HepG2 (cell line): ENCODE measurements at regions of chr1 and their contacts with region 1.

Region 1: DNA sequence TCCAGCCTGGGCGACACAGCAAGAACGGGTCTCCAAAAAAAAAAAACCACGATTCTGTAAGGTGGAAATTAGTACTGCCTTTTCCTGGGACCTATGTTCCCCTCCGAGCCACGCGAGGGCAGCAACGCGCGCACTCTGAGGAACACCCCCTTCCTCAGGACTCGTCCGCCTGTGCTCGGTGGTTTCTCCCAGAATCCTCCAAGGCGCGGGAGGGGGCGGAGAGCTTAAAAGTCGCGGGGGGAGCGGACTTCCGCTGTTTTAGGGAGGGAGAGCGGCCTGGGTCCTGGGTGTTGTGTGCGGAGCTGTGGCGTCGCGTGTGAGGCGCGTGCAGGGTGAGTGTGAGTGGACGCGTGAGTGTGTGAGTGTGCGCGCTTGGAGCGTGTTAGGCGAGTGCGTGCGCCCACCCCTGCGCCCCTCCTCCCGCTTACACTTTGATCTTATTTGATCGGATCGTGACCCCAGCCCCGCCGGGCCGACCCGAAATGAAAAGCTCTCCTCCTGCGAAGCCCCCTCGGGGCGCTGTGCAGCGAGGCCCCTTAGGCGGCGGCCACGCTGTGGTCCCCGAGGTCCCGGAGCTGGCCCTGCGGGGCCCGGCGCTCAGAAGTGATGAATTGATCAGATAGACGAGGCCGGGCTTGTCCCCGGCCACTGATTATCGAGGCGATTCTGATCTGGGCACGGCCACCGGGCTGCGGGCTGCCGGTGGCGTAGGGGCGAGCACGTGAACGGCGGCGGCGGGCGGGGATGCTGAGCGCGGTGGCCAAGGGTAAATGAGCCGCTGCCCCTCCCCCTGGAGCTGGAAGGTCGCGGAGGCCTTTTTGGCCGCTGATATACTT is 9.6 kb downstream of the TMEM167B start:
- DNase-seq: peak; percentile 94
- ATAC-seq: peak; percentile 91
- H3K4me3 ChIP-seq: peak overlapping the region; percentile 75 to 90 (median 85)
- H3K27ac ChIP-seq: peak overlapping the region; percentile 86
- H3K4me1 ChIP-seq: peaks cover 15% of the 10 kb centered on the region; the same call in 1 of the 2 replicates
- H3K27me3 ChIP-seq: no peaks in the 10 kb centered on the region
- CTCF ChIP-seq: peak; percentile 96
- EP300 ChIP-seq: peak in 1 of 2 experiments; percentile 43; a peak in 2 of 4 replicates
- POLR2A ChIP-seq: peak; percentile 100
- RAD21 ChIP-seq: peak; percentile 14; the same call in 1 of the 2 replicates

Region 2: DNA sequence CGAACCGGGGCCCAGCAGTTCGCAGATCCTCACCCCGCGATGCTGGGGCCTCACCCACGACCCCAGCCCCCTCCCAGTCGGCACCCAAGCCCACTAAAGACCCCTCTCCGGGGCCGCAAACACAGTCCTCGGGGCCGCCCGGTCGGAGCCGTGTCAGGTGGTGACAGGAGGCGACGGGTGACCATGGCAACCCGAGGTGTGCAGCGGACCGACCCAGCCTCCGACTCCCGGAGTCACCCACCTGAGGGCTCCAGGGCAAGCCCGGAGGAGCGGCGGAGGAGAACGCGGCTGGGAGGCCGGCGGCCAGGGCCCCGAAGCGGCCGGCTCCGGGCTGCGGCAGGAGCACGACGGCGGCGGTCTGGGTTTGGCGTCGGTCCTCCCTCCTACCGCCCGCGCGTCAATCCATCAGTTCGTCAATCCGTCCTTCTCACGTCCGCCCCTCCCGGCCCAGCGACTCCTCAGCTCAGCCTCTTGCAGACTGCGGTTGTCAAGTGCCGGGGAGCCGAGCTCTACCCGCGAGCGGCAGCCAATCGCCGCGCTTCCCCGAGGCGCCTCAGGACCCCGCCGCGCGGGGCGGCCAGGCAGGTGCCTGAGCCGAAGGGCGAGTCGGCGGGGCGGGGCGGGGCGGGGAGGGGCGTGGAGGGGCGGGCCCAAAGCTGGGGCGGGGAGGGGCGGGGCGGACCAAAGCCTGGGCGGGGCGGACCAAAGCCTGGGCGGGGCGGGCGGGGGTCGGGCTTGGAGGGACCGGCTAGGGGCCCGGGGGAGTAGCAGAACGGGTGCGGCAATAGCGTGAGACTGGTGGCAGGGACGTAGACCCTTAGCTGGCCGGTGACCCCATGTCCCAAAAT is 58.3 kb before region 1 on chr1 and contains the start of gene WDR47:
- CTCF ChIA-PET with region 1: no interaction called
- POLR2A ChIA-PET with region 1: interaction called, 16 read pairs
- in situ Hi-C with region 1: no loop called
- intact Hi-C with region 1: no loop called
- DNase-seq: peak; percentile 84
- ATAC-seq: peak; percentile 96
- H3K4me3 ChIP-seq: peak within 1 kb of the TSS; percentile 94 to 96 (median 95)
- H3K27ac ChIP-seq: peak within 1 kb of the TSS; percentile 58
- H3K4me1 ChIP-seq: peaks cover 20% of the 10 kb centered on the region
- H3K27me3 ChIP-seq: no peaks in the 10 kb centered on the region; a peak in 1 of 5 replicates
- CTCF ChIP-seq: no peak
- EP300 ChIP-seq: no peak
- POLR2A ChIP-seq: peak; percentile 94 to 98
- RAD21 ChIP-seq: peak; percentile 61
- total RNA-seq, gene WDR47: 5.9 and 6.0 TPM in 2 replicates

Region 3: GRCh38 chr1:109075531-109076490 is 24.3 kb before region 1 on chr1 and contains the start of gene TAF13:
- CTCF ChIA-PET with region 1: no interaction called
- POLR2A ChIA-PET with region 1: interaction called, 25 read pairs
- in situ Hi-C with region 1: no loop called
- intact Hi-C with region 1: no loop called
- DNase-seq: peak; percentile 89
- ATAC-seq: peak; percentile 100
- H3K4me3 ChIP-seq: peak within 1 kb of the TSS; percentile 67 to 90 (median 86)
- H3K27ac ChIP-seq: peak within 1 kb of the TSS; percentile 96
- H3K4me1 ChIP-seq: peaks cover 40% of the 10 kb centered on the region
- H3K27me3 ChIP-seq: no peaks in the 10 kb centered on the region; a peak in 2 of 5 replicates
- CTCF ChIP-seq: peak; percentile 54
- EP300 ChIP-seq: no peak
- POLR2A ChIP-seq: peak; percentile 96 to 97
- RAD21 ChIP-seq: peak; percentile 9; the same call in 1 of the 2 replicates
- total RNA-seq, gene TAF13: 36.3 and 62.1 TPM in 2 replicates

Region 4: GRCh38 chr1:109083923-109084322 is 16.2 kb before region 1 on chr1:
- CTCF ChIA-PET with region 1: interaction called, 15 read pairs
- POLR2A ChIA-PET with region 1: interaction called, 117 read pairs
- in situ Hi-C with region 1: no loop called
- intact Hi-C with region 1: no loop called
- DNase-seq: peak; percentile 82
- ATAC-seq: peak; percentile 67
- H3K4me3 ChIP-seq: peak overlapping the region in 1 of 3 experiments; percentile 57; a peak in 1 of 6 replicates
- H3K27ac ChIP-seq: peak overlapping the region; percentile 21
- H3K4me1 ChIP-seq: peaks cover 45% of the 10 kb centered on the region
- H3K27me3 ChIP-seq: no peaks in the 10 kb centered on the region
- CTCF ChIP-seq: no peak
- EP300 ChIP-seq: no peak
- POLR2A ChIP-seq: no peak
- RAD21 ChIP-seq: no peak

Region 5: DNA sequence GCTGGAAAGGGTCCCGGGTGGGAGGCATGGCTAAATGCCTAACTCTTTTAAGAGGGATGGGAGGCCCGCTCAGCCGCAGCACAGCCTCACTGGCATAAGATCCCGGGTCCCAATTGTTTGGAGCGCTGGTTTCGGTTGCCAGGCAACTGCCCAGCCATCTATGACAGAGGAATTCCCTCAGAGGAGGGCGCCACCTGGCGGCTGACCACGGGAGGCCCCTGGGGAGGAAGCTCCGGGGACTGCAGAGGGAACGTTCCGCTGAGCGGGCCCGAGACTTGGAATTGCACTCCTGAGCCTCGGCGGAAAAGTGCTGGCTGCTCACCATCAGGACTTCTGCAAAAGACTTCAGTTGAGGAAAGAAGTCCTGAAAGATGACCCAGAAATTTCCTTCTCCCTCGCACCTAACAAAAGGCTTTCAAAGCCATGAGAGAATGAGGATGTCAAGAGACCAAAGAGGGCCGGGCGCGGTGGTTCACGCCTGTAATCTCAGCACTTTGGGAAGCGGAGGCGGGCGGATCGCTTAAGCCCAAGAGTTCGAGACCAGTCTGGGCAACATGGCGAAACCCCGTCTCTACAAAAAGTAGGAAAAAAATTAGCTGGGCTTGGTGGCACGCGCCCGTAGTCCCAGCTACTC is 12.6 kb after region 1 on chr1:
- CTCF ChIA-PET with region 1: interaction called, 7 read pairs
- POLR2A ChIA-PET with region 1: interaction called, 46 read pairs
- in situ Hi-C with region 1: no loop called
- intact Hi-C with region 1: no loop called
- DNase-seq: peak; percentile 85
- ATAC-seq: peak; percentile 96
- H3K4me3 ChIP-seq: peak overlapping the region in 1 of 3 experiments; percentile 45; a peak in 2 of 6 replicates
- H3K27ac ChIP-seq: no peak overlapping the region
- H3K4me1 ChIP-seq: peaks cover 43% of the 10 kb centered on the region
- H3K27me3 ChIP-seq: peaks cover 2 to 36% of the 10 kb centered on the region in 2 experiments; a peak in 4 of 5 replicates
- CTCF ChIP-seq: peak; percentile 94
- EP300 ChIP-seq: no peak
- POLR2A ChIP-seq: no peak
- RAD21 ChIP-seq: peak; percentile 77

Region 6: DNA sequence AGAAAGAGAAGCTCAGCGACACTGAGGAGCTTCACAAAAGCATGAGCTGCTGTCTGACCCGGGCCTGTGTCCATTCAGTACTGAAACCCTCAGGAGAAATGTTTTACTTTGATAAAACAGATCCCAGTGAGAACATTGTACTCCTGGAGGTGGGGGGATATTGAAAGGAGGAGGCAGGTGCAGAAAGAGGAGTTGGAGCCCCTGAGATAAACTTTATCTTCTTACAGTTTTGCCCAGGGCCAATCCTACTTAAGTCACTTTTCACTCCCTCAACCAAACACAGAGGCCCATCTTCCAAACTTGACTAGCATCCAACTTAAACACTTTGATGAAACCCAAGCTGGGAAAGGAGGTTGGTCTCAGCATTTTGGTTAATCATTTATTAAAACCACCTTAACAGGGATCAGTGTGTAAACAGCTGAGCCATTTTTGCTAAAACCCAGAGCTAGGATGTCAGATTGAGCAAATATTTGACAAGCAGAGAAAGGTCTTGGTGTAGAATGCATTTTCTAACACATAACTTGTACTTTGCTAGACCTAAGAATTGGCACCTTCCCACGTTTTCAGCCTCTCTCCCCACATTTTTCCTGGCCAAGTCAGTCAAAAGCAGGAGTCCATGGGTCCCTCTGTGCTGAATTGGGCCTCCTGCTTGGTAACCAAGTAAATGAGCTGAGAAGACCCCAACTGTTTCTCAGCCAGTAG is 81.1 kb after region 1 on chr1:
- CTCF ChIA-PET with region 1: no interaction called
- POLR2A ChIA-PET with region 1: interaction called, 17 read pairs
- in situ Hi-C with region 1: no loop called
- intact Hi-C with region 1: no loop called
- DNase-seq: peak; percentile 96
- ATAC-seq: peak; percentile 88
- H3K4me3 ChIP-seq: peak overlapping the region in 1 of 3 experiments; percentile 31; a peak in 3 of 6 replicates
- H3K27ac ChIP-seq: peak overlapping the region; percentile 69
- H3K4me1 ChIP-seq: peaks cover 73% of the 10 kb centered on the region
- H3K27me3 ChIP-seq: no peaks in the 10 kb centered on the region; a peak in 1 of 5 replicates
- CTCF ChIP-seq: no peak
- EP300 ChIP-seq: peak in 1 of 2 experiments; percentile 87; a peak in 2 of 4 replicates
- POLR2A ChIP-seq: no peak
- RAD21 ChIP-seq: no peak

Region 7: GRCh38 chr1:109213785-109214468 is 113.8 kb after region 1 on chr1 and contains the start of gene SARS1:
- CTCF ChIA-PET with region 1: no interaction called
- POLR2A ChIA-PET with region 1: interaction called, 27 read pairs
- in situ Hi-C with region 1: no loop called
- intact Hi-C with region 1: no loop called
- DNase-seq: peak; percentile 76
- ATAC-seq: peak; percentile 92
- H3K4me3 ChIP-seq: peak within 1 kb of the TSS; percentile 71 to 100 (median 74)
- H3K27ac ChIP-seq: peak within 1 kb of the TSS; percentile 72
- H3K4me1 ChIP-seq: peaks cover 46% of the 10 kb centered on the region
- H3K27me3 ChIP-seq: peaks cover 0 to 2% of the 10 kb centered on the region in 2 experiments; a peak in 1 of 5 replicates
- CTCF ChIP-seq: no peak
- EP300 ChIP-seq: no peak
- POLR2A ChIP-seq: peak in 1 of 2 experiments; percentile 63; a peak in 1 of 4 replicates
- RAD21 ChIP-seq: no peak
- total RNA-seq, gene SARS1: 134 and 166 TPM in 2 replicates

Region 8: DNA sequence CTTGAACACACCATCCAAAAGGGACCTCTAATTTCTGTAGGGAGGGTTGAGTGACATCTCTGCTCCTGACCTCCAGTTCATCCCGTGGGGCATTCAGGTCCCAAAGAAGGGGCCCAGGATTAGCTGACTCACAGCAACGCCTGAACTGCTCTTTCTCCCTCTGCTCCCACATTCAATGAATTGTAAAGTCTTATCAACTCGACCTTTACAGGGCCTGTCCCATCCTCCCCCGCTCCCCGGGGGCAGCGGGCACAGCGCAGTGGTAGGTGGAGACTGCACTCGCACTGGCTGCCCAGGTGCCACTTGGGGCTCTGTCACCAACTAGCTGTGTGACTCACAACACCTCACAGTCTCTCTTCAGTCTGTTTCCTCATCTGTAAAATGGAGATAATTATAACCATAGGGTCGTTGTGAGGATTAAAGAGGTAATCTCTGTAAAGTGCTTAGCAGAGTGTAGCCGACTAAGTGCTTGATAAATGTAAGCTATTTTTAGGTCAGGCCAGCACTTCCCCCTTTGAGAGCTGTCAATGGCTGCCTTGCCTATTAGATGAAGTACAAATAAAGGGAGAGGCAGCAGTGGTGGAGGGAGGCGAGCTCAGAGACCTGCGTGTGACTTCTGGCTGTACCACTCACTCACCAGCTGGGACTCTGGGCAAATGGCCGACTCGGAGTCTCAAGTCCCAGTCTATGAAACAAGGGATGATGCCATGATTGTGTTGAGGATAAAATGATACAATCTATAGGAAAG is 207.3 kb after region 1 on chr1:
- CTCF ChIA-PET with region 1: no interaction called
- POLR2A ChIA-PET with region 1: no interaction called
- in situ Hi-C with region 1: no loop called
- intact Hi-C with region 1: no loop called
- DNase-seq: peak; percentile 34
- ATAC-seq: peak; percentile 28
- H3K4me3 ChIP-seq: peak overlapping the region in 2 of 3 experiments; percentile 36 to 62; a peak in 3 of 6 replicates
- H3K27ac ChIP-seq: peak overlapping the region; percentile 24
- H3K4me1 ChIP-seq: peaks cover 87% of the 10 kb centered on the region
- H3K27me3 ChIP-seq: no peaks in the 10 kb centered on the region
- CTCF ChIP-seq: no peak
- EP300 ChIP-seq: no peak
- POLR2A ChIP-seq: no peak
- RAD21 ChIP-seq: no peak